ENCODE measurements at regions of chr15 and their contacts with region 1.

Region 1: DNA sequence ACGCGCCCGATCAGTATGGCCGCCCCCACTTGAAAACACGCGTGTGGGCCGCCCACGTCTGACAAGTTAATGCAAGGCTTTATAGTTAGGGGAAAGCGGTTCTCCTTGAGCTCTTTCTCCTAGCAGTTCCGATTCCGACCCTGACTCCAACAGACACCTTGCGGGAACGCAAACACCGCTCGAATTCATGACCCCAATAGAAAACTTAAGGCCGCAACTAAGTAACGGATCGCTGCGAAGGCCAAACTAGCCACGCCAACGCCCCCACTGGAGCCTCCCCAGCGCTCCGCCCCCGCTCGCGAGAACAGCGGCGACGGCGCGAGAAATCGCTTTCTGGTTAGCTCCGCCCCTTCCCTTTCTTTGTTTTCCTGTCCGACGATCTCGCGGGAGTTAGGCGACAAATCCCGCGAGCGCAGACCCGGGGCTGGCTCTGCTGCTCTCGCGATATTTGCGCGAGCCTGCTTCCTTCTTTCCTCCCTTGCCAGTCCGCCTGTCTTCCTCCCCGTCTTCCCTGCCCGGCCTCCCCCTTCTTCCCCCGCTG is at the start of gene IREB2:
- DNase-seq: peak; percentile 97 to 98 (median 98)
- ATAC-seq: peak; percentile 96 to 98 (median 98)
- H3K4me3 ChIP-seq: peak within 1 kb of the TSS; percentile 69 to 96 (median 87)
- H3K27ac ChIP-seq: peak within 1 kb of the TSS; percentile 86 to 98 (median 96)
- H3K4me1 ChIP-seq: peaks cover 4 to 49% (median 41%) of the 10 kb centered on the region in 12 donors
- H3K27me3 ChIP-seq: no peaks in the 10 kb centered on the region
- CTCF ChIP-seq: peak in 2 of 12 donors; percentile 4 to 18
- POLR2A ChIP-seq: peak in 1 of 2 donors; percentile 65
- total RNA-seq, gene IREB2: 12.9 to 50.0 (median 30.0) TPM

Region 2: DNA sequence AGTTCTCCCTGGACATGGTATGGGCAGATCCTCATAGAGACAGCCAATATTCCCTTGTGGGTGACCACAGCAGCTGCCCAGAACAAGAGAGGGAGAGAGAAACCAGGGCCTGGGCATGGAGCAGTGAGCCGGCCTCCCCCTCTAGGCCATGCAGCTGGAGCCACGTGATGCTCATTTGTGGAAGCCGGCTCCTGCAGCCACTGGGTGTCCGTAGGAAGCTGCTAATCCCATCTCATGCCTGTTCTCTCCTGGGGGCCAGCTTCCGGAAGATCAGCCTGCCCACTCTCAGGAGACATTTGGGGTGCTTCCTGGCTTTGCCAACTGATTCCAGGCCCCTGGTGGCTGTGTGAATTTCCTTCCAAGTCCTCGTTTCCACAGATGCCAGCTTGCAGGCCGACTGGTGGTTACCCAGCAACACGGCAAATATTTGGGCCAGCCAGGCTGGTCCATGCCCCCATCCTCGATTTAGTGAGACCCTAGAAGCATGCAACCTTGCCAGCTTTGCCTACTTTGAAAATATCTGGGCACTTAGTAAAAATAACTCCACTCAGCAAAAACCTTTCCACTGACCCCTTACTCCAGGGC is 860.4 kb before region 1 on chr15:
- intact Hi-C with region 1: no loop called
- DNase-seq: peak in 1 of 5 donors; percentile 26
- ATAC-seq: peak in 2 of 4 donors; percentile 18 to 24
- H3K4me3 ChIP-seq: no peak overlapping the region
- H3K27ac ChIP-seq: no peak overlapping the region
- H3K4me1 ChIP-seq: peaks cover 0 to 12% (median under 1%) of the 10 kb centered on the region in 12 donors
- H3K27me3 ChIP-seq: no peaks in the 10 kb centered on the region
- CTCF ChIP-seq: no peak
- POLR2A ChIP-seq: no peak

Region 3: GRCh38 chr15:78244893-78245292 is 192.9 kb before region 1 on chr15:
- intact Hi-C with region 1: no loop called
- DNase-seq: no peak
- ATAC-seq: no peak
- H3K4me3 ChIP-seq: no peak overlapping the region
- H3K27ac ChIP-seq: no peak overlapping the region
- H3K4me1 ChIP-seq: peaks cover 0 to 14% (median 3%) of the 10 kb centered on the region in 12 donors
- H3K27me3 ChIP-seq: no peaks in the 10 kb centered on the region
- CTCF ChIP-seq: no peak
- POLR2A ChIP-seq: no peak

Region 4: GRCh38 chr15:78457101-78457500 is 19.3 kb after region 1 on chr15:
- intact Hi-C with region 1: loop called in 1 of 10 experiments (anchors 2 kb)
- DNase-seq: no peak
- ATAC-seq: peak in 2 of 4 donors; percentile 12 to 44
- H3K4me3 ChIP-seq: peak overlapping the region in 1 of 12 donors; percentile 11
- H3K27ac ChIP-seq: peak overlapping the region in 9 of 12 donors; percentile 2 to 84 (median 49)
- H3K4me1 ChIP-seq: peaks cover 0 to 80% (median 58%) of the 10 kb centered on the region in 12 donors
- H3K27me3 ChIP-seq: no peaks in the 10 kb centered on the region
- CTCF ChIP-seq: no peak
- POLR2A ChIP-seq: no peak

Region 5: DNA sequence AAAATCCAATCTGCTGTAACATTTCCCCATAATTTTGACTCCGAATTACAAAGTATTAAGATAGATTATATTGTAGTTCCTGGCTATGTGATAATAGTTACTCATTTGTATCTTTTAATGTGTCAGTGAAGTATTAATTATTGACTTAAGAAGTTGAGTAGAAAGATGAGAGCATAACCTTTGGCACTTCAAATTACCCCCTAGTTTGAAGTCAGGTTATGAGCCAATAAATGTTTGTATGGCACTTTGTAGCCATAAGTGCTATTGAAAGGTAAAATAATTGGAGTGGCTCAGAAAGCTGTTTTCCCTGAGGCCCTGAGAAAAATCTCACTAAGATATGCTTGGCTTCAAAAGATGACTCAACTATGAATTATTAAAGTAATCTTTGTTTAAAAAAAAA is 31.2 kb after region 1 on chr15:
- intact Hi-C with region 1: loop called in 1 of 10 experiments (anchors 5 kb)
- DNase-seq: no peak
- ATAC-seq: no peak
- H3K4me3 ChIP-seq: no peak overlapping the region
- H3K27ac ChIP-seq: no peak overlapping the region
- H3K4me1 ChIP-seq: peaks cover 0 to 24% (median 7%) of the 10 kb centered on the region in 12 donors
- H3K27me3 ChIP-seq: no peaks in the 10 kb centered on the region
- CTCF ChIP-seq: no peak
- POLR2A ChIP-seq: no peak